ENCODE measurements at regions of chrX and their contacts with region 1.

Region 1: GRCh38 chrX:1444561-1445500 is 7.9 kb downstream of the ASMTL start:
- DNase-seq: peak in 1 of 4 donors; percentile 4
- ATAC-seq: no peak
- H3K4me3 ChIP-seq: no peak overlapping the region
- H3K27ac ChIP-seq: no peak overlapping the region
- H3K4me1 ChIP-seq: no peaks in the 10 kb centered on the region
- H3K27me3 ChIP-seq: no peaks in the 10 kb centered on the region
- CTCF ChIP-seq: no peak
- POLR2A ChIP-seq: no peak

Region 2: GRCh38 chrX:1394708-1395501 is 49.9 kb before region 1 on chrX:
- intact Hi-C with region 1: loop called (anchors 5 kb)
- DNase-seq: peak in 3 of 4 donors; percentile 5 to 15 (median 13)
- ATAC-seq: no peak
- H3K4me3 ChIP-seq: no peak overlapping the region
- H3K27ac ChIP-seq: peak overlapping the region in 1 of 4 donors; percentile 31
- H3K4me1 ChIP-seq: peaks cover 21% of the 10 kb centered on the region
- H3K27me3 ChIP-seq: no peaks in the 10 kb centered on the region
- CTCF ChIP-seq: no peak
- POLR2A ChIP-seq: no peak

Region 3: DNA sequence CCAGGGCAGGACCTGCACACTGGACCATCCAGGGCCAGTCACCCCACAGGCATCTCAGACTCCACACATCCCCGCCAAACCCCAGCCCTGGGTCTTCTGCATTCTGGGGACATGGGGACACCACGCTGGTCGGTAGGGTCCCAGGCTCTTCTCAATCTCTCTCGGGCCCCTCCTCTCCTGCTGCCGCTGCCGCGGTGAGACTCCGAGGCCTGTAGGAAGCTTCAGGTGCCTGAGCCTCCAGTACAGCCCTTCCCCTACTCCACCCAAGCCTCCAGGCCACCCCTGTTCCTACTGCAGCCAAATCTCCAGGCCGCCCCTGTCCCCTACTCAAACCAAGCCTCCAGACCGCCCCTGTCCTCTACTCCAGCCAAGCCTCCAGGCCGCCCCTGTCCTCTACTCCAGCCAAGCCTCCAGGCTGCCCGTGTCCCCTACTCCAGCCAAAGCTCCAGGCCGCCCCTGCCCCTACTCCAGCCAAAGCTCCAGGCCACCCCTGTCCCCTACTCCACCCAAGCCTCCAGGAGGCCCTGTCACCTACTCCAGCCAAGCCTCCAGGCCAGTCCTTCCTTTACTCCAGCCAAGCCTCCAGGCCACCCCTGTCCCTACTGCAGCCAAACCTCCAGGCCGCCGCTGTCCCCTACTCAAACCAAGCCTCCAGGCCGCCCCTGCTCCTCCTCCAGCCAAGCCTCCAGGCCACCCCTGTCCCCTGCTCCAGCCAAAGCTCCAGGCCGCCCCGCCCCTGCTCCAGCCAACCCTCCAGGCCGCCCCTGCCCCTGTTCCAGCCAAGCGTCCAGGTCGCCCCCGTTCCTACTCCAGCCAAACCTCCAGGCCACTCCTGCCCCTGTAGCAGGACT is 164.7 kb after region 1 on chrX:
- intact Hi-C with region 1: no loop called
- DNase-seq: no peak
- ATAC-seq: no peak
- H3K4me3 ChIP-seq: no peak overlapping the region
- H3K27ac ChIP-seq: no peak overlapping the region
- H3K4me1 ChIP-seq: no peaks in the 10 kb centered on the region
- H3K27me3 ChIP-seq: no peaks in the 10 kb centered on the region
- CTCF ChIP-seq: no peak
- POLR2A ChIP-seq: no peak

Region 4: GRCh38 chrX:1657367-1658070 is 212.7 kb after region 1 on chrX:
- intact Hi-C with region 1: no loop called
- DNase-seq: peak in 1 of 4 donors; percentile 2
- ATAC-seq: no peak
- H3K4me3 ChIP-seq: no peak overlapping the region
- H3K27ac ChIP-seq: no peak overlapping the region
- H3K4me1 ChIP-seq: no peaks in the 10 kb centered on the region
- H3K27me3 ChIP-seq: no peaks in the 10 kb centered on the region
- CTCF ChIP-seq: no peak
- POLR2A ChIP-seq: no peak